Panc1 (cell line): ENCODE measurements at regions of chr10 and their contacts with region 1.

Region 1: DNA sequence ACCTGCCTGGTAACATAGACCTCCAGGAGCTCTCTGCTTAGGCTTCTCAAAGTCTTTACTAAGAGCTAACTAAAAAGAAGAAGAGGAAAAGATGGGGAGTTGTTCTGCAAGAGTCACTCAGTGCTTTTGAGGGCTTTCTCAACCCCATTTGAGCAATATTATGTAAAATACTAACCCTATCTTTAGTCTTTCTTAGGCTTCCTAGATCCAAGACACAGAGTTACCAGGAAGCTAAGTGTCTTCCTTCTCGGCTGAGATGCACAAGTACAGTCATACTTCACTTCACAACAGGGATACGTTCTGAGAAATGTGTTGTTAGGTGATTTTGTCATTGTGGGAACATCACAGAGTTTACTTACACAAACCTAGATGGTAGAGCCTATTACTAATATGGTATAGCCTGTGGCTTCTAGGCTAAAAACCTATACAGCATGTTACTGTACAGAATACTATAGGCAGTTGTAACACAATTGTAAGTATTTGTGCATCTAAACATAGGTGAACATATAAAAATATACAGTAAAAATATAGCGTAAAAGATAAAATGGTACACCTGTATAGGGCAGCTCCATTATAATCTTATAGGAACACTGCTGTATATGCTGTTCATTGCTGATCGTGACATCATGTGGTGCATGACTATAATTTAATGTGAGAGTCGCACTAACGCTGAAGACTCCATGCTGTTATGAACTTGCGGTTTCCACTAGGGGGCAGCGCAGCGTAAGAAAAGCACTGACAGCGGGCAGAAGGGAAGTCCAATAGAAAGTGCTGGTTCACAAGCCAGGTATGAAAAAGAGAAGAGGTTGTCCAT is 16.3 kb downstream of the ANKRD22 start:
- DNase-seq: peak; percentile 86
- ATAC-seq: peak; percentile 99
- H3K4me3 ChIP-seq: no peak overlapping the region
- H3K27ac ChIP-seq: 0 out of 2 replicates have a peak overlapping the region, but pooled peaks have one; percentile 8
- H3K4me1 ChIP-seq: peaks cover 3% of the 10 kb centered on the region; the same call in 1 of the 2 replicates
- H3K27me3 ChIP-seq: 0 out of 2 replicates have a peak, but pooled peaks cover 2% of the 10 kb centered on the region
- CTCF ChIP-seq: peak; percentile 94

Region 2: GRCh38 chr10:87925570-87925969 is 909.7 kb before region 1 on chr10:
- CTCF ChIA-PET with region 1: no interaction called
- POLR2A ChIA-PET with region 1: no interaction called
- in situ Hi-C with region 1: no loop called
- intact Hi-C with region 1: no loop called
- DNase-seq: no peak
- ATAC-seq: no peak
- H3K4me3 ChIP-seq: no peak overlapping the region
- H3K27ac ChIP-seq: no peak overlapping the region
- H3K4me1 ChIP-seq: peaks cover 4% of the 10 kb centered on the region; the same call in 1 of the 2 replicates
- H3K27me3 ChIP-seq: no peaks in the 10 kb centered on the region
- CTCF ChIP-seq: no peak

Region 3: DNA sequence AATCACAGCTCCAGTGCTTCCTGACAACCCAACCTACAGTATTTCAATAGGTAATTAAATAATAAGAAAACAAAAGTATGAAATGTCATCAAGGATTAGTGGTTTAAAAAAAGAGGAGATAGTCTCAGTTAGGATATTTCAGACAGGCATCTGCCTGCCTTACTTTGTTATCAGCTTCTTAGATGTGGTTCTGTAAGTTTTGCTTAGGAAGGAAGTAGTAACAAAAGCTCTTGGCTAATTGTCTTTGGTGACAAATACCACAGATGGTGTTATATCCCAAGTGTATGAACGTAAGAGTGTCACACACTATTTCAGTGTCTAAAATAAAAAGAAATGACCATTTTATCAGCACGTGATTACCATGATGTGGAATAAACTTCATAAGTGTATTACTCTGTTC is 127.0 kb after region 1 on chr10:
- CTCF ChIA-PET with region 1: no interaction called
- POLR2A ChIA-PET with region 1: no interaction called
- in situ Hi-C with region 1: no loop called
- intact Hi-C with region 1: no loop called
- DNase-seq: no peak
- ATAC-seq: no peak
- H3K4me3 ChIP-seq: no peak overlapping the region
- H3K27ac ChIP-seq: no peak overlapping the region
- H3K4me1 ChIP-seq: no peaks in the 10 kb centered on the region
- H3K27me3 ChIP-seq: no peaks in the 10 kb centered on the region; the same call in 1 of the 2 replicates
- CTCF ChIP-seq: no peak

Region 4: GRCh38 chr10:88986549-88987242 is 151.4 kb after region 1 on chr10:
- CTCF ChIA-PET with region 1: interaction called, 4 read pairs
- POLR2A ChIA-PET with region 1: no interaction called
- in situ Hi-C with region 1: no loop called
- intact Hi-C with region 1: loop called (anchors 5 kb)
- DNase-seq: no peak
- ATAC-seq: no peak
- H3K4me3 ChIP-seq: no peak overlapping the region
- H3K27ac ChIP-seq: no peak overlapping the region
- H3K4me1 ChIP-seq: 0 out of 2 replicates have a peak, but pooled peaks cover 5% of the 10 kb centered on the region
- H3K27me3 ChIP-seq: no peaks in the 10 kb centered on the region
- CTCF ChIP-seq: peak; percentile 83; the same call in 1 of the 2 replicates

Region 5: GRCh38 chr10:89147256-89147655 is 312.0 kb after region 1 on chr10:
- CTCF ChIA-PET with region 1: no interaction called
- POLR2A ChIA-PET with region 1: no interaction called
- in situ Hi-C with region 1: no loop called
- intact Hi-C with region 1: no loop called
- DNase-seq: no peak
- ATAC-seq: no peak
- H3K4me3 ChIP-seq: no peak overlapping the region
- H3K27ac ChIP-seq: no peak overlapping the region
- H3K4me1 ChIP-seq: no peaks in the 10 kb centered on the region
- H3K27me3 ChIP-seq: no peaks in the 10 kb centered on the region; the same call in 1 of the 2 replicates
- CTCF ChIP-seq: no peak